MCF 10A (cell line): ENCODE measurements at regions of chr7 and their contacts with region 1.

Region 1: DNA sequence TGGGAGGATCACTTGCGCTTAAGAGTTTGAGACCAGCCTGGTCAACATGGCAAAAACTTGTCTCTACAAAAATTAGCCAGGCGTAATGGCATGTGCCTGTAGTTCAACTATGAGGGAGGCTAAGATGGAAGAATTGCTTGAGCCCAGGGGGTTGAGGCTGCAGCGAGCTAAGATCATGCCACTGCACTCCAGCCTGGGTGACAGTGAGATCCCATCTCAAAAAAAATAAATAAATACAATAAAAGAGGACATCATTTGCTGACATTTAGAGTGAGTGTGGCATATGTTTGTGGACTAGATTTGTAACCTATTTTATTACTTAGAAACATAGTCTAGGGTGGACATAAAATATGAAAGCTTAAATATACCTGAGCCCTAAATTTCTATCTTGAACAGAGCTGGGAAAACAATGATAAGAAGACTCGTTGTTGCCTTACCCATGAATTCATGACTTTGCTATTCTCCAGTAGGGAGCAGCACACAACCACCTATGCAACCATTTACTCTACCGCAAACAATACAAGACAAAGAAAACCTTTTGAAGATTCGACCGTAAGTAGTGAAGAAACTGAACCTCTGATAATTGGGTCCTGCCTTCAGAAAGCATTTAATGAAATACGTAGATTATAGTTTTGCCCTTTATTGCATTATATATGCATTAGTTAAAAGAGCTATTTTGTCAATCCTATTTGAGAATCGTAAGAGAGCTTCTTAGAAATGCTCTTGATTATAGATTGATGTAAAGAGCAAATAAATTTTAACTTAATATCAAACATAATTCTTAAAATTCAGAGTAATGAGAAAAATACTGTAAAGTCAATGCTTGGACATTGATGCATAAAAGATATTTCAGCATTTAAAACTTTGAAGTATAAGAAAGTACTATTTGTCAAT is 83.5 kb downstream of the GNAT3 start:
- DNase-seq: peak; percentile 79
- H3K4me3 Mint-ChIP-seq: no peak overlapping the region
- H3K27ac Mint-ChIP-seq: no peak overlapping the region
- H3K4me1 Mint-ChIP-seq: peaks cover 7% of the 10 kb centered on the region
- H3K27me3 Mint-ChIP-seq: no peaks in the 10 kb centered on the region
- CTCF ChIP-seq: peak; percentile 69

Region 2: GRCh38 chr7:80417211-80417793 is 11.1 kb before region 1 on chr7:
- CTCF ChIA-PET with region 1: interaction called, 11 read pairs
- POLR2A ChIA-PET with region 1: no interaction called
- intact Hi-C with region 1: no loop called
- DNase-seq: no peak
- H3K4me3 Mint-ChIP-seq: no peak overlapping the region
- H3K27ac Mint-ChIP-seq: no peak overlapping the region
- H3K4me1 Mint-ChIP-seq: peaks cover 8% of the 10 kb centered on the region
- H3K27me3 Mint-ChIP-seq: no peaks in the 10 kb centered on the region
- CTCF ChIP-seq: no peak

Region 3: GRCh38 chr7:80445351-80445750 is 16.9 kb after region 1 on chr7:
- CTCF ChIA-PET with region 1: interaction called, 30 read pairs
- POLR2A ChIA-PET with region 1: interaction called, 4 read pairs
- intact Hi-C with region 1: no loop called
- DNase-seq: no peak
- H3K4me3 Mint-ChIP-seq: no peak overlapping the region
- H3K27ac Mint-ChIP-seq: no peak overlapping the region
- H3K4me1 Mint-ChIP-seq: peaks cover 18% of the 10 kb centered on the region
- H3K27me3 Mint-ChIP-seq: no peaks in the 10 kb centered on the region
- CTCF ChIP-seq: no peak

Region 4: DNA sequence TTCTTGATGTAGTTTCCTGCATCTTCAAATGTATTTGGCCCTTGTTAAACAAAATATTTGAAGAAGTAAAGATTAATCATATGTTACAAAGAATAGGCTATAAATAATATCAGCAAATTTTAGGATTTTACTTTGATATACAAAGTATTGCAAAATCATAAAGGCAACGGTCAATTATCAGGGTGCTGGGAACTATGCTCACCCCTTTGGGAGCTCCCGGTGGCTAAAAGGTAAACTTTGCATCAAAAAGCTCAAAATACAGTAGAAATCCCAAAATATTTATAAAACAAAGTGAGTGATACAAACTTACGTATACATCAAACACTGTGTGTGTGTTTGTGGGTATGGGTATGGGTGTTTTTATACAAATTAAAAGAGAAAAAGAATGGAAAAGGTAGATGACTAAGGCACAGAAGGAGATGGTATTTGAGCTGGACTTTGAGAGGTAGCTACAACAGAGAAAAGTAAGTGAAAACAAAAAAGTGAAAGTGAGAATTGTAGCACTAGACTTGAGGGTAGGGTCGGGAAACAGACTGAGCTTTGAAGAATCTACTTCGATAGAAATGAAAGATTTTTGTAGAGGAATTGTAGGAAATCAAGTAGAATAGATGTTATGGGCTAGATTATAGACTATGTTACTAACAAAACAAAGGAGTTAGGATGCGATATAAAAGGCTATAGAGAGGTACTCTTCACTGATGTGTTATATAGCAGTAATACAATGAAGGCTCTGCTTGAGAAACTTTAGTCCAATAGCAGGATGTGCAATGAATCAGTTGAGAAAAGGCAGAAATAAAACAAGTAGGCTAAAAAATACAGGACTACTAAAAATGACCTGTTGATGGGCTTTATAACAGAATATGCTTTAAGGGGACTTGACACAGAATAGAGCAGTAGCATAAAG is 30.7 kb after region 1 on chr7:
- CTCF ChIA-PET with region 1: interaction called, 10 read pairs
- POLR2A ChIA-PET with region 1: no interaction called
- intact Hi-C with region 1: no loop called
- DNase-seq: no peak
- H3K4me3 Mint-ChIP-seq: no peak overlapping the region
- H3K27ac Mint-ChIP-seq: no peak overlapping the region
- H3K4me1 Mint-ChIP-seq: peaks cover 6% of the 10 kb centered on the region
- H3K27me3 Mint-ChIP-seq: no peaks in the 10 kb centered on the region
- CTCF ChIP-seq: no peak

Region 5: GRCh38 chr7:80653244-80653643 is 224.8 kb after region 1 on chr7:
- CTCF ChIA-PET with region 1: interaction called, 50 read pairs
- POLR2A ChIA-PET with region 1: interaction called, 3 read pairs
- intact Hi-C with region 1: no loop called
- DNase-seq: no peak
- H3K4me3 Mint-ChIP-seq: no peak overlapping the region
- H3K27ac Mint-ChIP-seq: no peak overlapping the region
- H3K4me1 Mint-ChIP-seq: peaks cover 4% of the 10 kb centered on the region
- H3K27me3 Mint-ChIP-seq: no peaks in the 10 kb centered on the region
- CTCF ChIP-seq: no peak

Region 6: GRCh38 chr7:80675090-80675489 is 246.7 kb after region 1 on chr7:
- CTCF ChIA-PET with region 1: interaction called, 95 read pairs
- POLR2A ChIA-PET with region 1: no interaction called
- intact Hi-C with region 1: no loop called
- DNase-seq: no peak
- H3K4me3 Mint-ChIP-seq: no peak overlapping the region
- H3K27ac Mint-ChIP-seq: no peak overlapping the region
- H3K4me1 Mint-ChIP-seq: no peaks in the 10 kb centered on the region
- H3K27me3 Mint-ChIP-seq: no peaks in the 10 kb centered on the region
- CTCF ChIP-seq: no peak

Region 7: GRCh38 chr7:80699045-80699638 is 270.7 kb after region 1 on chr7:
- CTCF ChIA-PET with region 1: interaction called, 12 read pairs
- POLR2A ChIA-PET with region 1: no interaction called
- intact Hi-C with region 1: no loop called
- DNase-seq: peak; percentile 69
- H3K4me3 Mint-ChIP-seq: no peak overlapping the region
- H3K27ac Mint-ChIP-seq: peak overlapping the region; percentile 50
- H3K4me1 Mint-ChIP-seq: peaks cover 10% of the 10 kb centered on the region
- H3K27me3 Mint-ChIP-seq: no peaks in the 10 kb centered on the region
- CTCF ChIP-seq: peak; percentile 63